Vagina (tissue), 2 donors: ENCODE measurements at regions of chr16 and their contacts with region 1.

Region 1: DNA sequence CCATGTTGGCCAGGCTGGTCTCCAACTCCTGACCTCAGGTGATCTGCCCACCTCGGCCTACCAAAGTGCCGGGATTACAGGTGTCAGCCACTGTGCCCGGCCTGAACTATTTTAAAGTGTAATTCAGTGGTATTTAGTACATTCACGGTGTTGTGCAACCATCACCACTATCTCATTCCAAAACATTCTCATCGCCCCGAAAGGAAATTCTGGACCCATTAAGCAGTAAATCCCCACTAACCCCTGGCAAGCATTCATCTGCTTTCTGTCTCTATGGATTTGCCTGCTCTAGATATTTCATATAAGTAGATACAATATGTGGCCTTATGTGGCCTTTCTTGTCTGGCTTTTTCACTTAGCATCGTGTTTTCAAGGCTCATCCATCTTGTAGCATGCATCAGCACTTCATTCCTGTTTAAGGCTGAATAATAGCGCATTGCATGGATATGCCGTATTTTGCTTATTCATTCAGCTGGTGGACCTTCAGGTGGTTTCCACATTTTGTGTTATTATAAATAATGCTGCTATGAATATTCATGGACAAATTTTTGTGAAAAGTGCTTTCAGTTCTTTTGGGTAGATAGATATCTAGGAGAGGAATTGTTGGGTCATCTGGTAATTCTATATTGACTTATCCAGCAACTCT is 8.4 kb upstream of the HERPUD1 start:
- DNase-seq: no peak
- H3K4me3 ChIP-seq: no peak overlapping the region
- H3K27ac ChIP-seq: no peak overlapping the region
- H3K4me1 ChIP-seq: peaks cover 7% of the 10 kb centered on the region
- H3K27me3 ChIP-seq: no peaks in the 10 kb centered on the region
- CTCF ChIP-seq: no peak
- POLR2A ChIP-seq: no peak

Region 2: GRCh38 chr16:56841233-56841632 is 82.3 kb before region 1 on chr16:
- intact Hi-C with region 1: no loop called
- DNase-seq: no peak
- H3K4me3 ChIP-seq: no peak overlapping the region
- H3K27ac ChIP-seq: no peak overlapping the region
- H3K4me1 ChIP-seq: no peaks in the 10 kb centered on the region
- H3K27me3 ChIP-seq: no peaks in the 10 kb centered on the region
- CTCF ChIP-seq: no peak
- POLR2A ChIP-seq: no peak

Region 3: DNA sequence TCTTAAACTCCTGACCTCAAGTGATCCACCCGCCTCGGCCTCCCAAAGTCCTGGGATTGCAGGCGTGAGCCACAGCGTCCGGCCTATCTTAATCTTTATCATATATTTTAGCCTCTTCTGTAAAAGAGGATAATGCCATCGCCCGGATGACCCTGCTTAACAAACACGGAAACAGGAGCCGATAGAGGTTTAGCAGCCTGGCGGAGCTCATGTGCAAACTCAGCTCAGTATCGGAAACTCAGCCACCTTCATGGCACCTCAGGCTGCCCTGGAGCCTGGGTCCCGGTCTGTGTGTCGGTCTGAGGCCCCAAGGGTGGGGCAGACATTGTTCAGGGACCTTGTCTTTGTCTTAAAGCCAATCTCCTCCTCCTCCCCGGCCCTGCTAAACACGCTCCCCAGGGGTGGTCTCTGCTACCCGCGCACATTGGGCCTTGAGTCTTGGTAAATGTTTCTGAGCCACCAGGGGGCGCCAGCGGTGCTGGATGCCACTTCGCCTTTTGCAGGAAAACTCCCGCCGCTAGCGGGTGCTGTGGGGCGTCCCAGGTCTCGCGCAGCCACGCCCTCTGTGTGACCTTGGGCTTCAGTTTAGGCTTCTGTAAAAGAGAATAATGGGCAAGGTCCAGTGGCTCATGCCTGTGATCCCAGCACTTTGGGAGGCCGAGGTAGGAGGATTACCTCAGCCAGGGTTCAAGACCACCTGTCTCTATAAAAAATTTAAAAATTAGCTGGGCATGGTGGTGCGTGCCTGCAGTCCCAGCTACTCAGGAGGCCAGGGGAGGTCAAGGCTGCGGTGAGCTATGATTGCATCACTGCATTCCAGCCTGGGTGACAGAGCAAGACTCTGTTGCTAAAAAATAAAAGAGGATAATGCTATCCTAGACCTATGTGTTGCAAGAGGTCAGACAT is 40.9 kb after region 1 on chr16:
- intact Hi-C with region 1: no loop called
- DNase-seq: no peak
- H3K4me3 ChIP-seq: no peak overlapping the region
- H3K27ac ChIP-seq: no peak overlapping the region
- H3K4me1 ChIP-seq: peaks cover 12% of the 10 kb centered on the region
- H3K27me3 ChIP-seq: no peaks in the 10 kb centered on the region
- CTCF ChIP-seq: peak; percentile 54 to 69 (median 69)
- POLR2A ChIP-seq: no peak

Region 4: GRCh38 chr16:57497121-57497520 is 573.6 kb after region 1 on chr16:
- intact Hi-C with region 1: loop called (anchors 5 kb)
- DNase-seq: no peak
- H3K4me3 ChIP-seq: no peak overlapping the region
- H3K27ac ChIP-seq: no peak overlapping the region
- H3K4me1 ChIP-seq: no peaks in the 10 kb centered on the region
- H3K27me3 ChIP-seq: no peaks in the 10 kb centered on the region
- CTCF ChIP-seq: no peak
- POLR2A ChIP-seq: no peak